ENCODE measurements at regions of chr15 and their contacts with region 1.

Region 1: DNA sequence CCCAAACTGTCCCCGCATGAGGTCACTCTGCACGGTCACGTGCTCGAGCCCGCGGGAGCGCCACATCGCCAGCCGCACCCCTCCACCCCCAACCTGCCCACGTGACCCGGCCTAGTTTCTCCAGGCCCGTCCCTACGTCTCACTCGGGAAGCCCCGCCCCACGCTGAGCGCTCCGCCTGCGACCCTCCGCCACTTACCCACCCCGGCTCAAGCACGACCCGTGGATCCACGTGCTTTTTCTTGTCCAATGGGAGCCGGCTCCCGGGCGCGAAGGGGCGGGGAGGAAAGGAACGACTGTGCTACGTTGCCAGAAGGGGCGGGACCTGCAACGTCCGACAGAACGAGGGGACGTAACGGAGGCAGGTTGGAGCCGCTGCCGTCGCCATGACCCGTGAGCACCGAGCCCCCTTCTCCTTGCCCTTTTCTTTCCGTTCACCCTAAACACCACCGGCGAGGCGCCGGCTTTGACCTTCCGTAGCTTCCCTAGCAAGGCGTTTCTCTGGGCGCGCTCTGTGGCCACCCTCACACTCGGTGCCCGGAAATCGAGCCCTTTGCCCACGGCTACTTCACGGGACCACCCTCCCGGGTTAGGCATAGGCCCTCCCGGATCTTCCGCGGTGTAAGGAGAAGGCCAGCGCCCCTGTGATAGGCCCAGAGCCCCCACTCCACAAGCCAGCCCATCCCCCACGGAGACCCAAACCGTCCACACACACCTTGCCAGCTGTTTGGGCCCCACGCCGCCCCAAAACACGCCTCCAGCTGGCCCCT is at the start of gene SERF2:
- DNase-seq: peak; percentile 100
- H3K4me3 ChIP-seq: peak within 1 kb of the TSS; percentile 74 to 99
- H3K27ac ChIP-seq: peak within 1 kb of the TSS; percentile 88 to 99
- H3K4me1 ChIP-seq: peaks cover 19 to 26% of the 10 kb centered on the region in 2 donors
- H3K27me3 ChIP-seq: no peaks in the 10 kb centered on the region
- CTCF ChIP-seq: no peak
- total RNA-seq, gene SERF2: 733 TPM

Region 2: DNA sequence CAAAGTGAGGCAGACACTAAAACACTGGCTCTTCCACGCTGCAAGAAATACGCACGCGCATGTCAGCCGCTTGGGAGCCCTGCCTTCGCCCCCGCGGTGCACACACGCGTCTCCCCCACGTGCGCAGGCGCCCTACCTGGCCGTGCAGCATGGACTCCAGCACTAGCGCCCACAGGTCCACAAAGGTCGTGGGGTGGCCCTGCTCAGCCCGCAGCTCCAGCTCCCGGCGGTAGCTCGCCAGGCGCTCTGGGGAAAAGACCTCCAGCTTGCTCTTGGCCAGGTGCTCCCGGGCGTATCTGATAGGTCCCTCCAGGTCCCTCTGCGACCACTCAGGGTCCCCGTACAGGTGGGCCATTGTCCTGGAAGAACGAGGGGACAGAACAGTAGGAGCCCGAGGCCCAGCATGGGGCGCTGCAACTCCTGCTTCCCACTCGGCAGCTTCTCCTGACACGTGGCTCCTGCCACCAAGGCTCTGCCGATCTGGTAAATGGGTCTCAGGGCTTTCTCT is 1712.7 kb before region 1 on chr15:
- intact Hi-C with region 1: no loop called
- DNase-seq: no peak
- H3K4me3 ChIP-seq: no peak overlapping the region
- H3K27ac ChIP-seq: no peak overlapping the region
- H3K4me1 ChIP-seq: no peaks in the 10 kb centered on the region
- H3K27me3 ChIP-seq: no peaks in the 10 kb centered on the region
- CTCF ChIP-seq: no peak

Region 3: DNA sequence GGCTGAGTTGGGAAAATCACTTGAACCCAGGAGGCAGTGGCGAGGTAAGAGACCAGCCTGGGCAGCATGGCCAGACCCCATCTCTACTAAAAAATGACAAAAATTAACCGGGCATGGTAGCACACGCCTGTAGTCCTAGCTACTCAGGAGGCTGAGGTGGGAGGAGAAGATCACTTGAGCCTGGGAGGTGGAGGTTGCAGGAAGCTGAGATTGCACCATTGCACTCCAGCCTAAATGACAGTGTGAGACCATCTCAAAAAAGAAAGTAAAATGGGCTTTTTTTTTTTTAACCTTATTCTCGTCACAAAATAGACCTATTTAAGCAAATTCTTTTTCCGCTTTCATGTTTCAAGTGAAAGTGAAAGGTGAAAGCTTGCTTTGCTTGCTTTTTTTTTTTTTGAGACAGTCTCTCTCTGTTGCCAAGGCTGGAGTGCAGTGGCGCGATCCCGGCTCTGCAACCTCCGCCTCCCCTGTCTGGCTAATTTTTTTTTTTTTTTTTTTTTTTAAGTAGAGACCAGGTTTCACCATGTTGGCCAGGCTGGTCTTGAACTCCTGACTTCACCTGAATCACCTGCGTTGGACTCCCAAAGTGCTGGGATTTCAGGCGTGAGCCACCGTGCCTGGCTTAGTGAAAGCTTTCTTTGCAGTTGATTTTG is 42.4 kb before region 1 on chr15:
- intact Hi-C with region 1: loop called (anchors 1 kb)
- DNase-seq: no peak
- H3K4me3 ChIP-seq: peak overlapping the region in 1 of 2 donors; percentile 0
- H3K27ac ChIP-seq: no peak overlapping the region
- H3K4me1 ChIP-seq: peaks cover 3 to 14% of the 10 kb centered on the region in 2 donors
- H3K27me3 ChIP-seq: no peaks in the 10 kb centered on the region
- CTCF ChIP-seq: no peak

Region 4: GRCh38 chr15:43776718-43777583 is 15.2 kb before region 1 on chr15 and contains the start of gene ELL3:
- intact Hi-C with region 1: loop called (anchors 1 kb)
- DNase-seq: peak; percentile 53 to 91
- H3K4me3 ChIP-seq: peak within 1 kb of the TSS; percentile 57 to 73
- H3K27ac ChIP-seq: peak within 1 kb of the TSS; percentile 88 to 92
- H3K4me1 ChIP-seq: peaks cover 0 to 11% of the 10 kb centered on the region in 2 donors
- H3K27me3 ChIP-seq: no peaks in the 10 kb centered on the region
- CTCF ChIP-seq: peak; percentile 79 to 87 (median 84)
- total RNA-seq, gene ELL3: 39.5 TPM

Measured in ascending aorta (tissue), 2 donors.